RWPE1 (cell line): ENCODE measurements at regions of chr20 and their contacts with region 1.

Region 1: DNA sequence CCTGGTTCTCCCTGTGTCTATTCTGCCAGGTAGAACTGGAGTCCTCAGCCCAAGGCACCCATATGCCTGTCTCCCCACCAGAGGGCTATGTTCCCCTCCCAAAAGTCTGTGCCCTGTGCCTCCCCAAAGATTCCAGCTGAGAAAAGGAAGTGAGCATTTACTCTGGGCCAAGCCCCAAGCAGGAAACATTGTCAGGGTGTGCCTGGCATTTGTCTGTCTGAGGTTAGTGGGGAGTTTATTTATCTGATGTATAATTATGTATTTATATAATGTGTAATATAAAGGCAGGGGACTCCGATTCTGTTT is 5.6 kb downstream of the GDF5 start:
- DNase-seq: no peak
- H3K27ac ChIP-seq: peak overlapping the region; percentile 2; the same call in 1 of the 2 replicates
- CTCF ChIP-seq: no peak

Region 2: GRCh38 chr20:35410613-35411012 is 21.8 kb before region 1 on chr20:
- CTCF ChIA-PET with region 1: no interaction called
- POLR2A ChIA-PET with region 1: no interaction called
- DNase-seq: no peak
- H3K27ac ChIP-seq: 0 out of 2 replicates have a peak overlapping the region, but pooled peaks have one; percentile 11
- CTCF ChIP-seq: no peak

Region 3: DNA sequence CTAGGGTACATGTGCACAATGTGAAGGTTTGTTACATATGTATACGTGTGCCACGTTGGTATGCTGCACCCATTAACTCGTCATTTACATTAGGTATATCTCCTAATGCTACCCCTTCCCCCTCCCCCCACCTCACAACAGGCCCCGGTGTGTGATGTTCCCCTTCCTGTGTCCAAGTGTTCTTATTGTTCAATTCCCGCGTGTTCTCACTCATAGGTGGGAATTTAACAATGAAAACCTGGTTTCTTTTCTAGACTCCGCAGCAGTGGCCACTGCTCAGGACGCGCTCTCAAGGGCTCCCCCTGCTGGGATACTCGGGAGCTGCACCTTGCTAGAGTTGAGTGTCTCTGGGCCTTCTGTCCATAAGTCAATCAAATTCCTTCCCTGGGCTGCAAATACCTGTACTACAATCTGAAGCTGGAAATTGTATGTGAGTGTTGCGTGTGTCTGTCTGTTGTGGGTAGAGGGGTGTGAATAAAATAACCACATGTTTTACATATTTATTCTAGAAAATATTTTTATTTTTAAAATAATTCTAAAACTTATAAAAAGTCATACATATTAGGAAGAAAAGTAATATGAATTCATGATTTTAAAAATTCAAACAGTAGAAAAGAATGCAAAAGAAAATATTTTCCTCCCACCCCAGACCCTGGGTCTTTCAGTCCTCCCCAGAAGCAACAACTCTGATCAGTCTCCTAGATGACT is 14.9 kb after region 1 on chr20:
- CTCF ChIA-PET with region 1: interaction called, 23 read pairs
- POLR2A ChIA-PET with region 1: no interaction called
- DNase-seq: peak; percentile 90
- H3K27ac ChIP-seq: peak overlapping the region; percentile 65
- CTCF ChIP-seq: peak; percentile 100

Region 4: DNA sequence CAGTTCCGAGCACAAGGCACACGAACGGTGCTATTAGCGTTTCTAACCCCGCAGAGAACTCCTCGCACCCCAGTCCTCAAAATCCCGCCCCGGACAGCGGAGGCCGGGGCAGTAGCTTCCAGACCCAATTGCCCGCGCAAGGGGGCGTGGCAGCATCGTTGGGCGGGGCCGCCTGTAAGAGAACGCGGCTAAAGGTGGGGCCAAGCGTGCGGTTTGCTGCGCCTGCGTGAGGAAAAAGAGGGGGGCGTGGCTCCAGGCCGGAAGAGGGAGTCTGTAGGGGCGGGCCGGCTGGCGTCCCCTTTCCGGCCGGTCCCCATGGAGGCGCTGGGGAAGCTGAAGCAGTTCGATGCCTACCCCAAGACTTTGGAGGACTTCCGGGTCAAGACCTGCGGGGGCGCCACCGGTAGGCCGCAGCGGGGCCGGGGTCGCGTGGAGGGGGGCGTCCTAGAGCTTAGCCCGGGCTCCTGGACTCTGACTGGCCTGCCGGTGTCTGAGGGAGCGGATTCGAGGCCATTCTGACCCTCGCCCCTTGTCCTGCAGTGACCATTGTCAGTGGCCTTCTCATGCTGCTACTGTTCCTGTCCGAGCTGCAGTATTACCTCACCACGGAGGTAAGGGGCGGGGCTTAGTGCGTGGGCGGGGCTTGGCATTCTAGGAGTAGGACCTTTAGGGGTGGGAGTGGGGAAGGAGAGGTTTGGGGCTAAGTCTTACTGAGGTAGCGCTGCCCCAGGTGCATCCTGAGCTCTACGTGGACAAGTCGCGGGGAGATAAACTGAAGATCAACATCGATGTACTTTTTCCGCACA is 109.6 kb after region 1 on chr20 and contains the start of gene ERGIC3:
- CTCF ChIA-PET with region 1: no interaction called
- POLR2A ChIA-PET with region 1: no interaction called
- DNase-seq: peak; percentile 98
- H3K27ac ChIP-seq: peak within 1 kb of the TSS; percentile 81
- CTCF ChIP-seq: no peak